ENCODE measurements at regions of chr1 and their contacts with region 1.

Region 1: GRCh38 chr1:178310685-178311105 is 186.1 kb downstream of the CLEC20A start:
- DNase-seq: peak; percentile 29
- H3K4me3 ChIP-seq: no peak overlapping the region
- H3K27ac ChIP-seq: no peak overlapping the region
- H3K4me1 ChIP-seq: no peaks in the 10 kb centered on the region
- H3K27me3 ChIP-seq: no peaks in the 10 kb centered on the region
- CTCF ChIP-seq: peak; percentile 48 to 87 (median 80)
- POLR2A ChIP-seq: no peak

Region 2: DNA sequence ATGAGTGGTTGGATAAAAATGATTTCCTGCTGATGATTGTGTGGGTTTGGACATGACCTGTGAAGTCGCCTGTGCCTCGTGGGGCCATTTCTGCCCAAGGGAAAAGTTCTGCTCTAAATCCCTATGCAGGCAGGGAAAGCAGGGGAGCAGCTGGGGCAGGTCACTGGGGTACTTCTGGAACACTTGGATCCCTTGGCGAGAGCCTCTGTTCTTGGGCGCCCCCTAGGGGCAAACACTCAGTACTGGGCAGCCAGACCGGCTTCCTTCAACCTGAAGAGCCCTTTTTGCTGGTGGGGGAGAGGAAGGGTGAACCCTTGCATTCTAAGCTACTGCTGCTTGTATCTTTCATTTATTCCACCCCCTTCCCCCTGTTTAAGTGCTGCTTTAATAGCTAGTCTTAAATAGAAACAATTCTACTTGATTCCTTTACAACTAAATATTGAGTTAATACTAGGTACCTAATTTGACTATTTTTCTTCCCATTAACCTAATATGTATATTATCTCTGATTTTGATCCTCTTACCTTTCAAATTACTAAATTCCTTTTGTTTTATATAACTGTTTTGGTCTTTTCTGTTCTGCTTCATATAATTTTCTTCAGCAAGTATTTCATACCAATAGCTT is 191.1 kb after region 1 on chr1:
- intact Hi-C with region 1: loop called (anchors 5 kb)
- DNase-seq: peak; percentile 58
- H3K4me3 ChIP-seq: no peak overlapping the region
- H3K27ac ChIP-seq: no peak overlapping the region
- H3K4me1 ChIP-seq: no peaks in the 10 kb centered on the region
- H3K27me3 ChIP-seq: no peaks in the 10 kb centered on the region
- CTCF ChIP-seq: peak; percentile 53 to 82 (median 76)
- POLR2A ChIP-seq: no peak

Region 3: DNA sequence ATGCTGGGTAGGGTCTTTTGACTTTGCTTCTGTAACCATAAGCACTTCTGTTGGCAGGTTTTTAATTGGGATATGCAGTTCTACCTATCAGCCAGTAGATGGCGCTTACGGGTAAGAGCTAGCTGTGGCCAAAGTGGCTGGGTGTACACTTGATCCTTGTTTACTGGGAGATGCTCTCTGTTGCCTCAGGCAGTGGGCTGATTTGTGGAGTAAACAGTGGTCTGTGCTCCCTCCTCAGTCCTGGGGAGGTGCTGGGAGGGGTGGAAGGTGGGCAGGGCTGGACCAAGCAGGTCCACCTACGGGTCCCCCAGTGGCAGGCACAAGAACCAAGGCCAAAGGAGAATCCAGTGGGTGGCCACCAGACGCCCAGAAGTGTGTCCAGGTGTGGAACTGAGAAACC is 457.7 kb after region 1 on chr1:
- intact Hi-C with region 1: loop called (anchors 10 kb)
- DNase-seq: no peak
- H3K4me3 ChIP-seq: no peak overlapping the region
- H3K27ac ChIP-seq: no peak overlapping the region
- H3K4me1 ChIP-seq: no peaks in the 10 kb centered on the region
- H3K27me3 ChIP-seq: no peaks in the 10 kb centered on the region
- CTCF ChIP-seq: peak in 2 of 4 experiments; percentile 32 to 42
- POLR2A ChIP-seq: no peak

Measured in prostate gland (tissue), 2 donors.